B cell (primary cell): ENCODE measurements at regions of chr18 and their contacts with region 1.

Region 1: GRCh38 chr18:43587538-43588153 is 310.4 kb upstream of the SYT4 start:
- DNase-seq: peak; percentile 23
- ATAC-seq: no peak
- H3K4me3 ChIP-seq: no peak overlapping the region
- H3K4me3 Mint-ChIP-seq: no peak overlapping the region
- H3K27ac ChIP-seq: no peak overlapping the region
- H3K27ac Mint-ChIP-seq: no peak overlapping the region
- H3K4me1 ChIP-seq: no peaks in the 10 kb centered on the region
- H3K4me1 Mint-ChIP-seq: no peaks in the 10 kb centered on the region
- H3K27me3 ChIP-seq: no peaks in the 10 kb centered on the region
- H3K27me3 Mint-ChIP-seq: peaks cover 4% of the 10 kb centered on the region
- CTCF ChIP-seq: peak; percentile 81

Region 2: DNA sequence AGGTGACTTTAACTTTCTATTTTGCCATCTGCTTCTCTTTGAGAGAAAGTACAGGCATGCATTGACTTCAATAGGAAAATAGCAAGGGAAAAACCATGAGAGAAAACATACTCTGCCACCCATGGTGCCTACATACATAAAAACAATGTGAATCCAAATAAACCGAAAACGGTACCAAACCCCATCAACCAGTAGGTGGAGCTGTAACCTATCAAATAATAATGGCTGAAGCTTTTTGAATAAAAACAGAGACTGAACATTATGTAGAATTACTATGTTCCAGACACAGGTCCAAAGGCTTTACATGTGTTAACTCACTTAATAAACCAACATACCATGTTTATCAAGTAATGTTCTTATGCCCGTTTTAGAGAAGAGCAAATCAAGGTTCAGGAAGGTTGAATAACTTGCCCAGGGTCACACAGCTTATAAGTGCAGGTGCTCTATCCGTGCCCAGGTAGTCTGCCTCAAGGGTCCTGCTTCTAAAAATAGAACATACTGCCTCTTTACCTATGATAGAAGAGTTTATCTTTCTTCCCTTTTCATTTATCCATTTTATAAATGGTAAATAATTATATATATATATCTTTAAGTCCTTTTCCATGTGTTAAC is 16.5 kb before region 1 on chr18:
- CTCF ChIA-PET with region 1: interaction called, 35 read pairs
- POLR2A ChIA-PET with region 1: no interaction called
- intact Hi-C with region 1: no loop called
- DNase-seq: peak; percentile 33
- ATAC-seq: no peak
- H3K4me3 ChIP-seq: no peak overlapping the region
- H3K4me3 Mint-ChIP-seq: no peak overlapping the region
- H3K27ac ChIP-seq: no peak overlapping the region
- H3K27ac Mint-ChIP-seq: no peak overlapping the region
- H3K4me1 ChIP-seq: no peaks in the 10 kb centered on the region
- H3K4me1 Mint-ChIP-seq: no peaks in the 10 kb centered on the region
- H3K27me3 ChIP-seq: no peaks in the 10 kb centered on the region
- H3K27me3 Mint-ChIP-seq: no peaks in the 10 kb centered on the region
- CTCF ChIP-seq: peak; percentile 74